ENCODE measurements at regions of chr17 and their contacts with region 1.

Region 1: DNA sequence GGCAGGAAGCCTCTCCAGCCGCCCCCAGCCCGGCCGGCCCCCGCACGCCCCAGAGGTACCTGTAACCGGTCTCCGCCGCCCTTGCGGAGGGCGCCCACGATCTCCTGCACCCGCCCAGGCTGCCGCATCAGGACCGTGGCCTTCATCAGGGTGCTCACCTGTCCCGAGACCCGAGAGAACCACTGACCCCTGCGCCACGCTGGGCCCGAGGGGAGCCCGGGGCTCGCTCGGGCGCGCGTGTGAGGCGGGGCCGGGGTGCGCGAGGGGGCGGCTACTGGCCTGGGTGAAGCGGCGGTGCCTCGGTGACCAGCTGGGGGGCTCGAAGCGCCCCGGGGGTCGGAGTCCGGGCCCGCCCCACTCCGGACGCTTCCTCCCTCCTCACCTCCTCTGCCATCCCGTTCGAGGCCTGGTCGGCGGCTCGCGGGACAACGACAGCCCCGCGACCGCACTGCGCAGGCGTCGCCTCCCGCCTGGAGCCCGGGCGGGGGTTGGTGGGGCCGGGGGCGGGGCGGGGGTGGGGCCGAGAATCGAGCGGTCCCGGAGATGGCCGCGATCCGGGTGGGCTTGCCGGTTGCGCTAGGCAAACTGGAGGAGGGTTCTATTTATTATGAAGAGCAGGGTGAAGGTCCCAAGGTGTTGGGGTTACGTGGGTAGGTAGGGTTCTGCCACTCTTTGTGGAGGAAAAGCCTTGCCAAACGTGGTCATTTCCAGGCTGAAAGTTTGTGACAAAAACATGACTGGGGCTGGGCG is at the start of gene NT5C3B:
- DNase-seq: peak in 1 of 2 donors; percentile 83
- H3K4me3 ChIP-seq: peak within 1 kb of the TSS; percentile 71 to 87
- H3K27ac ChIP-seq: peak within 1 kb of the TSS; percentile 76 to 89
- H3K4me1 ChIP-seq: peaks cover 0 to 7% of the 10 kb centered on the region in 2 donors
- H3K27me3 ChIP-seq: no peaks in the 10 kb centered on the region
- CTCF ChIP-seq: no peak
- total RNA-seq, gene NT5C3B: 36.7 TPM

Region 2: GRCh38 chr17:41864836-41865595 is 29.0 kb after region 1 on chr17 and contains the start of gene KLHL11:
- intact Hi-C with region 1: loop called (anchors 1 kb)
- DNase-seq: peak; percentile 56 to 93
- H3K4me3 ChIP-seq: peak within 1 kb of the TSS; percentile 80 to 99
- H3K27ac ChIP-seq: peak within 1 kb of the TSS; percentile 77 to 92
- H3K4me1 ChIP-seq: peaks cover 3 to 14% of the 10 kb centered on the region in 2 donors
- H3K27me3 ChIP-seq: no peaks in the 10 kb centered on the region
- CTCF ChIP-seq: no peak
- total RNA-seq, gene KLHL11: 8.9 TPM

Measured in ascending aorta (tissue), 2 donors.